ENCODE measurements at regions of chr21 and their contacts with region 1.

Region 1: GRCh38 chr21:42537106-42537742 is 23.6 kb downstream of the SLC37A1 start:
- DNase-seq: peak; percentile 79
- H3K4me3 ChIP-seq: peak overlapping the region; percentile 80
- H3K27ac ChIP-seq: peak overlapping the region; percentile 98
- H3K4me1 ChIP-seq: peaks cover 64% of the 10 kb centered on the region
- CTCF ChIP-seq: peak; percentile 94

Region 2: GRCh38 chr21:42117229-42117966 is 419.8 kb before region 1 on chr21:
- CTCF ChIA-PET with region 1: no interaction called
- POLR2A ChIA-PET with region 1: interaction called, 3 read pairs
- intact Hi-C with region 1: loop called (anchors 5 kb)
- DNase-seq: peak; percentile 84
- H3K4me3 ChIP-seq: peak overlapping the region; percentile 10
- H3K27ac ChIP-seq: peak overlapping the region; percentile 93
- H3K4me1 ChIP-seq: peaks cover 70% of the 10 kb centered on the region
- CTCF ChIP-seq: peak; percentile 99

Region 3: DNA sequence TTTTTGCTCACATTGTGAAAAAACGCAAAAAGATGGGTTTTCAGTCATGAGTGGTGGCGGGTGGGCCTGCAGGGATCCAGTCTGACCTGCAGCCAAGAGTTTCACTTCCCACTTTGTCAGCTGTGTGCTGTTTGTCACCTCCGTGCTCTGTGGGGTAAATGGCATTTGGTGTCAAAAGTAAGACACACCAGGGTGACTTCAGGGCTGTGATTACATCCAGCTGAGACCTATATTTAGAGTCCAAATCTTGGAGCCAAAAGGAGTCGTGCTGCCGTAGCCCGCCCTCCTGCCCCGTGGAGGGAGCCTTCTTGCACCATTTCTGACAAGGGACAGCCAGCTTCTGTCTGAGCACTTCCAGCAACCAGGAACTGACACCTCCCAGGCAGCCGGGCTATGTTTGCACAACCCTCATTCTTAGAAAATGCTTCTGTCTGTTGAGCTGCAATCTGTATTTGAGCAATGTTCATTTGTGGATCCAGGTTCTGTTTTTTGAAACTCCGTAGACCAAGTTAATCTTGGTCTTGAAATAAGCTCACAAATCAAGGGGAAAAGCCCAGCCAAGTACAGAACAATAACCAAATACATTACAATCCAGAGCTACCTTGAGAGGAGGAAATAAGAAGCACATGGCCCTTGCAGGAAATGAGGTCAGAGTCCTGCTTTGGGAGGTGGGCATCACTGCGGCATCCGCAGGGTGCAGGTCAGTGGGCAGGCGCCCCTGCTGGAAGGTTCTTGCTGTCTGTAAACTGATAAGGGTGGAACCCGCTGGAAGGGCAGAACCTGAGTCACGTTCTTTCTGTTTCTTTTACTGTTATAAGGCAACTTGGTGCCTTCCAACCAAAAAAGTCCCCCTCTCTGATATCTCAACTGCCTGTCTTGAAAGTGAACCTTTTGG is 303.9 kb before region 1 on chr21:
- CTCF ChIA-PET with region 1: interaction called, 3 read pairs
- POLR2A ChIA-PET with region 1: interaction called, 3 read pairs
- intact Hi-C with region 1: loop called (anchors 1 kb)
- DNase-seq: peak; percentile 97
- H3K4me3 ChIP-seq: peak overlapping the region; percentile 61
- H3K27ac ChIP-seq: peak overlapping the region; percentile 99
- H3K4me1 ChIP-seq: peaks cover 99% of the 10 kb centered on the region
- CTCF ChIP-seq: peak; percentile 64

Region 4: GRCh38 chr21:42381334-42381984 is 155.8 kb before region 1 on chr21:
- CTCF ChIA-PET with region 1: interaction called, 3 read pairs
- POLR2A ChIA-PET with region 1: interaction called, 3 read pairs
- intact Hi-C with region 1: loop called (anchors 1 kb)
- DNase-seq: peak; percentile 64
- H3K4me3 ChIP-seq: no peak overlapping the region
- H3K27ac ChIP-seq: no peak overlapping the region
- H3K4me1 ChIP-seq: peaks cover 12% of the 10 kb centered on the region
- CTCF ChIP-seq: peak; percentile 89

Region 5: GRCh38 chr21:42467140-42467983 is 69.9 kb before region 1 on chr21:
- CTCF ChIA-PET with region 1: interaction called, 5 read pairs
- POLR2A ChIA-PET with region 1: interaction called, 13 read pairs
- intact Hi-C with region 1: loop called (anchors 2 kb)
- DNase-seq: peak; percentile 58
- H3K4me3 ChIP-seq: no peak overlapping the region
- H3K27ac ChIP-seq: no peak overlapping the region
- H3K4me1 ChIP-seq: peaks cover 87% of the 10 kb centered on the region
- CTCF ChIP-seq: peak; percentile 66

Region 6: DNA sequence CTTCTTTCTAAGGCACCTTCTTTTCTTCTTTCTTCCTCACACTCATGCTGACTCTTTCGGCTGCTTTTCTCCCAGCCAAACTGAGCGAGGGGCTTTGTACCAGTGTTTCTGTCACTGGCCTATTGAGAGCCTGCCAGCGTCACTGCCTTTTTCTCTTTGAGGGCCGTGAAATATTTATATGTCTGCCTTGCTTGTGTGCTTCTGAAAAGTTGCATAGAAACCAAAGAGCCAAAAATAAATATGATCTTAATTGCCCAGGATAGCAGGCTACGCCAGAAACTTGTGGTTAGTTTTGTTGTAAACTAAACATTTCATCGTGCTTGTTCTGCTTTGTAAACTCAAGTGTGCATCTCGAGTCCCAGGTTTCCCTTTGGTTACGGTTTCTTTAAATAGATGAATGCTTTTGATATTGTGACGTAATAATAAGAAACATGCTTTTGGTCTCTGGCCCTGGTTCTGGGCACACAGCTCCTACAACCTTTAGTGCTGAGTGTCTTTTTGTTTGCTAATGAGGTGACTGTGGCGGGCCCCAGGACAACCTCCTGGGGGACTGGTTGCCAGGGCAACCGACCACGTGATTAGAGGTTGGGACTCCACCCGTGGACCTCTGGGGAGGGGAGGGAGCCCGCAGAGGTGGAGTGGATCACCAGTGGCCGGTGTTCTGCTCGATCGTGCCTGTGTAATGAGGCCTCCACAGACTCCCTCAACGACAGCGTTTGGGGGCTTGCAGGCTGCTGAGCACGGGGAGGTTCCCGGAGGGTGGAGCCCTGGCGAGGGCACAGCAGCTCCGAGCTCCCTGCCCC is 12.7 kb before region 1 on chr21:
- CTCF ChIA-PET with region 1: interaction called, 12 read pairs
- POLR2A ChIA-PET with region 1: interaction called, 32 read pairs
- intact Hi-C with region 1: no loop called
- DNase-seq: peak; percentile 85
- H3K4me3 ChIP-seq: peak overlapping the region; percentile 53
- H3K27ac ChIP-seq: peak overlapping the region; percentile 98
- H3K4me1 ChIP-seq: peaks cover 63% of the 10 kb centered on the region
- CTCF ChIP-seq: no peak